B cell (primary cell): ENCODE measurements at regions of chr9 and their contacts with region 1.

Region 1: GRCh38 chr9:96418074-96418809 is at the start of gene ZNF367:
- DNase-seq: peak; percentile 95
- ATAC-seq: peak; percentile 73
- H3K4me3 ChIP-seq: peak within 1 kb of the TSS; percentile 53 to 100 (median 92)
- H3K4me3 Mint-ChIP-seq: peak within 1 kb of the TSS; percentile 97
- H3K27ac ChIP-seq: peak within 1 kb of the TSS; percentile 91 to 95
- H3K27ac Mint-ChIP-seq: peak within 1 kb of the TSS; percentile 97
- H3K4me1 ChIP-seq: peaks cover 36 to 47% of the 10 kb centered on the region in 2 donors
- H3K4me1 Mint-ChIP-seq: peaks cover 39% of the 10 kb centered on the region
- H3K27me3 ChIP-seq: no peaks in the 10 kb centered on the region
- H3K27me3 Mint-ChIP-seq: no peaks in the 10 kb centered on the region
- CTCF ChIP-seq: no peak
- total RNA-seq, gene ZNF367: 1.7 and 2.2 TPM in 2 replicates

Region 2: GRCh38 chr9:95317119-95317892 is 1100.9 kb before region 1 on chr9 and contains the start of gene FANCC:
- CTCF ChIA-PET with region 1: no interaction called
- POLR2A ChIA-PET with region 1: no interaction called
- intact Hi-C with region 1: loop called (anchors 2 kb)
- DNase-seq: peak; percentile 92
- ATAC-seq: peak; percentile 82
- H3K4me3 ChIP-seq: peak within 1 kb of the TSS; percentile 72 to 98 (median 94)
- H3K4me3 Mint-ChIP-seq: peak within 1 kb of the TSS; percentile 94
- H3K27ac ChIP-seq: peak within 1 kb of the TSS; percentile 74 to 84
- H3K27ac Mint-ChIP-seq: peak within 1 kb of the TSS; percentile 93
- H3K4me1 ChIP-seq: peaks cover 14 to 16% of the 10 kb centered on the region in 2 donors
- H3K4me1 Mint-ChIP-seq: peaks cover 16% of the 10 kb centered on the region
- H3K27me3 ChIP-seq: peaks cover 0 to 6% (median 5%) of the 10 kb centered on the region in 4 experiments
- H3K27me3 Mint-ChIP-seq: peaks cover 4% of the 10 kb centered on the region
- CTCF ChIP-seq: no peak
- total RNA-seq, gene FANCC: 11.1 and 13.7 TPM in 2 replicates

Region 3: GRCh38 chr9:96327694-96328352 is 90.4 kb before region 1 on chr9:
- CTCF ChIA-PET with region 1: interaction called, 20 read pairs
- POLR2A ChIA-PET with region 1: interaction called, 7 read pairs
- intact Hi-C with region 1: loop called (anchors 1 kb)
- DNase-seq: peak; percentile 64
- ATAC-seq: peak; percentile 56
- H3K4me3 ChIP-seq: no peak overlapping the region
- H3K4me3 Mint-ChIP-seq: no peak overlapping the region
- H3K27ac ChIP-seq: no peak overlapping the region
- H3K27ac Mint-ChIP-seq: no peak overlapping the region
- H3K4me1 ChIP-seq: no peaks in the 10 kb centered on the region
- H3K4me1 Mint-ChIP-seq: no peaks in the 10 kb centered on the region
- H3K27me3 ChIP-seq: no peaks in the 10 kb centered on the region
- H3K27me3 Mint-ChIP-seq: no peaks in the 10 kb centered on the region
- CTCF ChIP-seq: peak; percentile 91

Region 4: GRCh38 chr9:96449845-96450612 is 31.8 kb after region 1 on chr9 and contains the start of gene HABP4:
- CTCF ChIA-PET with region 1: interaction called, 5 read pairs
- POLR2A ChIA-PET with region 1: interaction called, 4 read pairs
- intact Hi-C with region 1: loop called (anchors 1 kb)
- DNase-seq: peak; percentile 96
- ATAC-seq: peak; percentile 95
- H3K4me3 ChIP-seq: peak within 1 kb of the TSS; percentile 59 to 74 (median 65)
- H3K4me3 Mint-ChIP-seq: peak within 1 kb of the TSS; percentile 94
- H3K27ac ChIP-seq: no peak within 1 kb of the TSS
- H3K27ac Mint-ChIP-seq: peak within 1 kb of the TSS; percentile 83
- H3K4me1 ChIP-seq: peaks cover 12 to 13% of the 10 kb centered on the region in 2 donors
- H3K4me1 Mint-ChIP-seq: peaks cover 14% of the 10 kb centered on the region
- H3K27me3 ChIP-seq: peaks cover 0 to 8% (median 0%) of the 10 kb centered on the region in 4 experiments
- H3K27me3 Mint-ChIP-seq: peaks cover 7% of the 10 kb centered on the region
- CTCF ChIP-seq: no peak
- total RNA-seq, gene HABP4: 14.1 and 15.0 TPM in 2 replicates

Region 5: DNA sequence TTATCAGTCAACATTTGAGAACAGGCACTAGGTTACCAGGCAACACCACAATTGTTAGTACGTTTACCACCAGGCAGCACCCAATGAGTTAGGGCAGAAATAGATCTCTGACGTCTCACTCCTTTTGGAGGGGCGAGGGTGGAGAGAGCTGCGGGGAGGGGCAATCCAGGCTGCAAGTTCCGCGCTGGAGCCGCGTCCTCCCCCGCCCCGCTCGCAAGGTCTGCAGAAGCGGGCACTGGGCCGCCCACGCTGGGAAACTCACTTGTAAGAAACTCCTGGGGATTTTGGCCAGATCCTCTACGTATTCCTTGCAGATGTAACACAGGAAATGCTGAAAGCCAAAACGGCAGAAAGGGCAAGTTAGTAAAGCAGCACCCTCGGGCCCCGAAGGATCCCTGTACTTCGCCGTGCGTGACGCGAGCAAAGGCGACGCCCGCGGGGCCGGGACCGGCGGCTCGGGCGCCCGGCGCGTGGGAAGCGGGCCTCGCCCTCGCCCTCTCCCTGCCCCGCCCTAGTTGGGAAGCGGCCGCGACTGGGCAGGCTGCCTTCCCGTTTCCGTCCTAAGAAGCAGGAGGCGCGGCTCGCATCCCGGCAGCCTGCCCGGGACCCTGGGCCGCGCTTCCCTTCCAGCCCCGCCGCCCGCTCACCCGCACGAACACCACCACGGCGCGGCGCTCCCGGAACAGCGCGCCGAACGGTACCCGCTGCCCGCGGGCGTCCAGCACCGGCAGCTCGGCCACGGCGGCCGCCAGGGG is 236.4 kb after region 1 on chr9:
- CTCF ChIA-PET with region 1: no interaction called
- POLR2A ChIA-PET with region 1: no interaction called
- intact Hi-C with region 1: loop called (anchors 1 kb)
- DNase-seq: peak; percentile 89
- ATAC-seq: peak; percentile 62
- H3K4me3 ChIP-seq: peak overlapping the region in 4 of 5 experiments; percentile 44 to 84 (median 60)
- H3K4me3 Mint-ChIP-seq: peak overlapping the region; percentile 96
- H3K27ac ChIP-seq: peak overlapping the region; percentile 69 to 85
- H3K27ac Mint-ChIP-seq: peak overlapping the region; percentile 98
- H3K4me1 ChIP-seq: peaks cover 8 to 16% of the 10 kb centered on the region in 2 donors
- H3K4me1 Mint-ChIP-seq: peaks cover 19% of the 10 kb centered on the region
- H3K27me3 ChIP-seq: no peaks in the 10 kb centered on the region
- H3K27me3 Mint-ChIP-seq: no peaks in the 10 kb centered on the region
- CTCF ChIP-seq: no peak

Region 6: DNA sequence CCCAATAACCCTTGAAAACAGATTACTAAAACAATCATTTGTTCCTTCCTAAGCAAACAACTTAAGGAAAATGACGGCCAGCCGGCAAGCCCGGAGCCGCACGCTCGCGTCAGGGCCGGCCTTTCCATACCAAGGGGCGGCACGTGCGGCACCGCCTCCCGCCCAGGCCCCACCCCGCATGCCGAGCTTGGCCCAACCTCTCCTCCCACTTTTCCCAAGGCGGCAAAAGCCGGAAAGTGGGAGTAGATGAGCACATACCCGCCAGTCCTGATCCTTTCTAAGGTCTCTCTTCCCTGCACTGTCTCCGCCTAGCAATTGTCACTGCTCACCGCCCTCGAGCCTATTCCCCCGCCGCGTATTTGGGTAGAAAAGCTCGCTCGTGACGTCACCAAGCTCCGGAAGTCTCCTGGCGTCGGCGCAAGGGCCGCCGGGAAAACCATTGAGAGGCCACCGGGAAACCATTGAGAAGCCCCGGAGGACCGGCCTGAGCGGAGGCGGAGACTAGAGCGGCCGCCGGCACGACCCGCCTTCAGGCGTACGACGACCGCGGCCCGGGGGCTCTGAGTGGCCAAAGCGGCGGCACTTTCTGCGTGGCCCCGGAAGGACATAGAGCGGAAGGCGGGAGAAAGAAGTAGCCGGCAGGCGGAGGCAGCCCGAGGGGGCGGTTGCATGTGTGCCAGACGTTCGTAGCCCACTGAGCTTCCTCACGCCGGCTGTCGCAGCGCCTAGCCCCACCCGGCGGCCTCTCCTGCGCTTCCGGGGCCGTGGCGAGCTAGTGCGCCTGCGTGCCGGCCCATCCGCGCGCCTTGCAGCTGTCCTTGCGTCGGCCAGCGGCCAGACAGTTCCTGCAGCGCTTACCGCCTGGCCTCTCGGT is 1215.0 kb after region 1 on chr9 and contains the starts of genes NCBP1 and TSTD2:
- CTCF ChIA-PET with region 1: no interaction called
- POLR2A ChIA-PET with region 1: no interaction called
- intact Hi-C with region 1: loop called (anchors 2 kb)
- DNase-seq: peak; percentile 99
- ATAC-seq: peak; percentile 91
- H3K4me3 ChIP-seq: peak within 1 kb of the TSS; percentile 94 to 99 (median 95)
- H3K4me3 Mint-ChIP-seq: peak within 1 kb of the TSS; percentile 97
- H3K27ac ChIP-seq: peak within 1 kb of the TSS; percentile 92 to 93
- H3K27ac Mint-ChIP-seq: peak within 1 kb of the TSS; percentile 98
- H3K4me1 ChIP-seq: peaks cover 26 to 35% of the 10 kb centered on the region in 2 donors
- H3K4me1 Mint-ChIP-seq: peaks cover 58% of the 10 kb centered on the region
- H3K27me3 ChIP-seq: no peaks in the 10 kb centered on the region
- H3K27me3 Mint-ChIP-seq: no peaks in the 10 kb centered on the region
- CTCF ChIP-seq: no peak
- total RNA-seq, gene NCBP1: 38.0 and 40.7 TPM in 2 replicates
- total RNA-seq, gene TSTD2: 29.2 and 31.1 TPM in 2 replicates

Region 7: GRCh38 chr9:97982683-97983588 is 1564.7 kb after region 1 on chr9 and contains the start of gene ANP32B:
- CTCF ChIA-PET with region 1: no interaction called
- POLR2A ChIA-PET with region 1: no interaction called
- intact Hi-C with region 1: loop called (anchors 10 kb)
- DNase-seq: peak; percentile 96
- ATAC-seq: peak; percentile 79
- H3K4me3 ChIP-seq: peak within 1 kb of the TSS; percentile 25 to 97 (median 84)
- H3K4me3 Mint-ChIP-seq: peak within 1 kb of the TSS; percentile 92
- H3K27ac ChIP-seq: peak within 1 kb of the TSS; percentile 90 to 93
- H3K27ac Mint-ChIP-seq: peak within 1 kb of the TSS; percentile 98
- H3K4me1 ChIP-seq: peaks cover 28 to 34% of the 10 kb centered on the region in 2 donors
- H3K4me1 Mint-ChIP-seq: peaks cover 29% of the 10 kb centered on the region
- H3K27me3 ChIP-seq: no peaks in the 10 kb centered on the region
- H3K27me3 Mint-ChIP-seq: no peaks in the 10 kb centered on the region
- CTCF ChIP-seq: peak; percentile 96
- total RNA-seq, gene ANP32B: 138 and 150 TPM in 2 replicates